ENCODE measurements at regions of chr10 and their contacts with region 1.

Region 1: DNA sequence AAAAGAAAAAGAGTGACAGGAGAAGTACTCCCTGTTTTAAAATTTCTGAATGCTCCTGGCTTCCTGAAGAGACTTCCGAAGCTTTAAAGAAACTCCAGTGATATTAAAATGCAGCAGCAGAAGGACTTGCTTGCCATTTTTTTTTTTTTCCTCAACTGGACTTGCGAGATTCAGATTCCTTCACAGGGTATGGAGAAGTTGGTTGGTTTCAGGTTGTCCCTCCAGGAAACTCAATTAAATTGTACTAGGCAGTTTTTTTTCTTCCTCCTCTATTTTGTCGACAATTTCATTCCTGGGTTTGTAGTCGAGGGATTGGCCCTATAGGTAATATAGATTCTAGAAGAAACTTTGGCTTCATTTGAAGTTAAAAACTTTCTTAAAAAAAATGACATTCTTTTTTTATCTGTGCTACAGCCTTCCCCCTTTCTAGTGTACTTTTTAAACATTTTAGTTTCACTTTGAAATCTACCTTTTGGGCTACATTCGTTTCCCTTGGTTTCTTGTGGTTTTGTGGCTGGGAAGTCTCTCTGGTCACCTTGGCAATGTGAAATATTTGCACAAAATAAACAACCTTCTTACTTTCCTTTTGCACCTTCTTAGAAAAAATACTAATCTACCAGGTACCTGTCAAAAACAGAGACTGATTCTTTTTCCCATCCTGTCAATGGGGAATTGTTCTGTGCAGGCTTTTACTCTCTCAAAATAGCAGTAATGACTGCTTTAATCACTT is 350.1 kb downstream of the GATA3 start:
- DNase-seq: peak; percentile 63
- H3K4me3 Mint-ChIP-seq: peak overlapping the region; percentile 75
- H3K27ac Mint-ChIP-seq: peak overlapping the region; percentile 98
- H3K4me1 Mint-ChIP-seq: peaks cover 80% of the 10 kb centered on the region
- H3K27me3 Mint-ChIP-seq: no peaks in the 10 kb centered on the region

Region 2: GRCh38 chr10:8138471-8138870 is 266.1 kb before region 1 on chr10:
- intact Hi-C with region 1: loop called (anchors 2 kb)
- DNase-seq: no peak
- H3K4me3 Mint-ChIP-seq: peak overlapping the region; percentile 79
- H3K27ac Mint-ChIP-seq: peak overlapping the region; percentile 93
- H3K4me1 Mint-ChIP-seq: peaks cover 63% of the 10 kb centered on the region
- H3K27me3 Mint-ChIP-seq: no peaks in the 10 kb centered on the region

Region 3: DNA sequence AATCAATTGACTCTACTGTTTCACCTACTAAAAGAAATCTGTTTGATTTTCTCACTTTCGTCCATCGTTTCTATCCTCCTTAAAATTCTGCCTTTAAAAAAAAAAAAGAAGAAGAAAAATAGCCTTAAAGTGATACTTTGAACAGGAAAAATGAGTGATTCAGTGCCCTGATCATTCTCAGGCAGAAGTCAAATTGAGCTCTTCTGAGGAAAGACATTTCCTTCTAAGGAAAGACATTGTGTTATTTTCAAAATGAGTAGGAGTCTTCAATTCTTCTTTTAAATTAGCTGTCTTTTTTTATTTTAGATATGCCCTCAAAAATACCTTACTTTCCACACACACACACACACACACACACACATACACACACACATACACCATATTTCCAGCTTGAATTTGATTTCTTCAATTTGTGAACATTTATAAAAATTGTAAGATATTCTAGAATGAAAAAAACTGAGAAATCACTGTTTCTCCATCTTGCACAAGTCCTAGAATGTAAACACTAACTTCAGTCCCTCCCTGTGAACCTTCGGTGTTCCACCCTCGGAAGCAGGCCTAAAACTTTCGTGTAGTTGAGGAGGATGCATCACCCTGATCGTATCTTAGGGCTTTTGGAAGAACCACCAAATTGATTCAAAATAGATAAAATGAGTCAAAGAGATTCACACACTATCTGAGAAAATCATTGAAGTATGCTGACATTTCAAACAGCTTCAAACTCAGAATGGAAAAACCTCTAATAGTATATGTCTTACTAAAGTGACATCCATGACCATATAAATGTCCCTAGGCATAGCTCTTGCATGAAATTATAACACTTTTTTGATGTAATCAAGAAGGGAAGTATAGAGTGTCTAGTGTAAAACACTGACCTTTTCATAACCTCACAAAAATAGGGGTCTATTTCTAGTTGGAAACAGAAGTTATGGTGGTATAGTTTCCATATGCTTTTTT is 79.3 kb before region 1 on chr10:
- intact Hi-C with region 1: loop called (anchors 2 kb)
- DNase-seq: peak; percentile 42
- H3K4me3 Mint-ChIP-seq: peak overlapping the region; percentile 40
- H3K27ac Mint-ChIP-seq: peak overlapping the region; percentile 93
- H3K4me1 Mint-ChIP-seq: peaks cover 78% of the 10 kb centered on the region
- H3K27me3 Mint-ChIP-seq: no peaks in the 10 kb centered on the region

Region 4: GRCh38 chr10:8338177-8338766 is 66.3 kb before region 1 on chr10:
- intact Hi-C with region 1: loop called (anchors 1 kb)
- DNase-seq: no peak
- H3K4me3 Mint-ChIP-seq: peak overlapping the region; percentile 97
- H3K27ac Mint-ChIP-seq: peak overlapping the region; percentile 100
- H3K4me1 Mint-ChIP-seq: peaks cover 68% of the 10 kb centered on the region
- H3K27me3 Mint-ChIP-seq: no peaks in the 10 kb centered on the region

Region 5: DNA sequence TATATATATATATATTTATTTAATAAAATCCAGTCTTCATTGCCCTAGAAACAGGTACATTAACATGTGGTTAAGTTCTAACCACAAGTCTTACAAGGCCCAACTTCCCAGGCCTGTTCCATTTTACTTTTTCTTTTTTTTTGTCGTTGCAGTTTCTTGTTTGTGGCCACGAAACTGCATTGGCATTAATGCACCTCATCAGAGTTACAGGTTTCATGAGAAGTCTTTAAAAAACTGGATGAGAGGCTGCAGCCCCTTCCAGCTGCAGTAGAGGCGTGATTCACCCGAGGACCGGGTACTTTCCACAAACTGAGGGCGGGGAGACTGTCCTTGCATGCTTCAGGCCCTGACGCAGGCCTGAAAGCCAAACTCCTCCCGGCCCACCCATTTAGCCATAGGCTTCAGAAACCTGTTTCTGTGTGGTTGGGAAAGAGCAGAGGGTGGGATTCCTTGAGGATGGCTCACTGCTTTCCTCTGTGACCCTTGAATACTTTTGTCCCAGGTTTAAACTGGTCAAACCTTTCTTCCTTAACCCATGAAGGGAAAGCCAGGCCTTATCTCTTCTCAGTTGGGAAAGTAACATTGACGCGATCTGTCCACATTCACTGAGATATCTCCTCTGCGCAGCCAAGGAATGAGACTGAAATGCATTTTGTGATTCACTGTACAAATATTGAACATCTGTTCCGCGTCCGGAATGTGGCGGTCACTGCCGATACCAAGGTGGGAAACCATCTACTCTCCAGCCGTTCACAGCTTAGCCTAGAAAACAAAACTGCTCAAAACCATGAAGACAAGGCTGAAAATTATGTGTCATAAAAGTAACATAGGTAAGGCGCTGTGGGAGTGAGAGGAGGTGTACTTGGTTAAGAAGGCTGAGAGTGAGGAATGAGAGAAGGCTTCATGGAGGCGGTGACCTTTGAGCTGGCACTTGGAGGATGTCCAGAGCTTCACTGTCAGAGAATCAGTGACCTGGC is 38.3 kb before region 1 on chr10:
- intact Hi-C with region 1: loop called (anchors 1 kb)
- DNase-seq: peak; percentile 46
- H3K4me3 Mint-ChIP-seq: peak overlapping the region; percentile 64
- H3K27ac Mint-ChIP-seq: peak overlapping the region; percentile 98
- H3K4me1 Mint-ChIP-seq: peaks cover 69% of the 10 kb centered on the region
- H3K27me3 Mint-ChIP-seq: no peaks in the 10 kb centered on the region

Region 6: GRCh38 chr10:8778713-8779112 is 374.2 kb after region 1 on chr10:
- intact Hi-C with region 1: loop called (anchors 5 kb)
- DNase-seq: no peak
- H3K4me3 Mint-ChIP-seq: no peak overlapping the region
- H3K27ac Mint-ChIP-seq: peak overlapping the region; percentile 84
- H3K4me1 Mint-ChIP-seq: peaks cover 33% of the 10 kb centered on the region
- H3K27me3 Mint-ChIP-seq: no peaks in the 10 kb centered on the region

Region 7: GRCh38 chr10:9024210-9024609 is 619.7 kb after region 1 on chr10:
- intact Hi-C with region 1: loop called (anchors 2 kb)
- DNase-seq: no peak
- H3K4me3 Mint-ChIP-seq: no peak overlapping the region
- H3K27ac Mint-ChIP-seq: peak overlapping the region; percentile 88
- H3K4me1 Mint-ChIP-seq: peaks cover 74% of the 10 kb centered on the region
- H3K27me3 Mint-ChIP-seq: no peaks in the 10 kb centered on the region